Calu3 (cell line): ENCODE measurements at regions of chr3 and their contacts with region 1.

Region 1: GRCh38 chr3:191269289-191270085 is 59.7 kb upstream of the CCDC50 start:
- DNase-seq: no peak
- H3K4me3 Mint-ChIP-seq: no peak overlapping the region
- H3K27ac Mint-ChIP-seq: no peak overlapping the region
- H3K4me1 Mint-ChIP-seq: no peaks in the 10 kb centered on the region
- H3K27me3 Mint-ChIP-seq: no peaks in the 10 kb centered on the region
- CTCF ChIP-seq: no peak

Region 2: GRCh38 chr3:190780524-190780923 is 489.0 kb before region 1 on chr3:
- CTCF ChIA-PET with region 1: no interaction called
- intact Hi-C with region 1: no loop called
- DNase-seq: no peak
- H3K4me3 Mint-ChIP-seq: no peak overlapping the region
- H3K27ac Mint-ChIP-seq: no peak overlapping the region
- H3K4me1 Mint-ChIP-seq: no peaks in the 10 kb centered on the region
- H3K27me3 Mint-ChIP-seq: no peaks in the 10 kb centered on the region
- CTCF ChIP-seq: no peak

Region 3: DNA sequence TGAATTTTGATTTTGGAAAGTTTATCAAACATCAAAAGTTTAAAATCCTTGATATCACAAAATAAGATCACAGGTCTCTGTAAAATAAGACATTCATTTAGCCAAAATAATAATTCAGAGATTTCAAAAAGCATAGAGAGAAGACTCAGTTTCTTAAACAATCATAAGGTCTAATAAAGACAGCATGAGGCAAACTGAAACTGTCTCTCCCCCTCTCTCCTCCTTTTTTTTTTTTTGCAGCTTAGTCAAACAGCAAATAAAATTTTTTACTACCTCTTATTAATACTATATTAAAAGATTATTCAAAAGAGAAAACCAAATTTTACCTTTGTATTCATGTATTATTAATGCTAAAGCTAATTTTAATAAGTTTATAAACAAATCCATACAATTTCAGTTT is 13.1 kb before region 1 on chr3:
- CTCF ChIA-PET with region 1: interaction called, 11 read pairs
- intact Hi-C with region 1: no loop called
- DNase-seq: no peak
- H3K4me3 Mint-ChIP-seq: no peak overlapping the region
- H3K27ac Mint-ChIP-seq: no peak overlapping the region
- H3K4me1 Mint-ChIP-seq: peaks cover 8% of the 10 kb centered on the region
- H3K27me3 Mint-ChIP-seq: no peaks in the 10 kb centered on the region
- CTCF ChIP-seq: no peak